Activated CD4-positive, alpha-beta T cell treated with anti-CD3 and anti-CD28 coated beads for 36 hours (primary cell): ENCODE measurements at regions of chr10 and their contacts with region 1.

Region 1: DNA sequence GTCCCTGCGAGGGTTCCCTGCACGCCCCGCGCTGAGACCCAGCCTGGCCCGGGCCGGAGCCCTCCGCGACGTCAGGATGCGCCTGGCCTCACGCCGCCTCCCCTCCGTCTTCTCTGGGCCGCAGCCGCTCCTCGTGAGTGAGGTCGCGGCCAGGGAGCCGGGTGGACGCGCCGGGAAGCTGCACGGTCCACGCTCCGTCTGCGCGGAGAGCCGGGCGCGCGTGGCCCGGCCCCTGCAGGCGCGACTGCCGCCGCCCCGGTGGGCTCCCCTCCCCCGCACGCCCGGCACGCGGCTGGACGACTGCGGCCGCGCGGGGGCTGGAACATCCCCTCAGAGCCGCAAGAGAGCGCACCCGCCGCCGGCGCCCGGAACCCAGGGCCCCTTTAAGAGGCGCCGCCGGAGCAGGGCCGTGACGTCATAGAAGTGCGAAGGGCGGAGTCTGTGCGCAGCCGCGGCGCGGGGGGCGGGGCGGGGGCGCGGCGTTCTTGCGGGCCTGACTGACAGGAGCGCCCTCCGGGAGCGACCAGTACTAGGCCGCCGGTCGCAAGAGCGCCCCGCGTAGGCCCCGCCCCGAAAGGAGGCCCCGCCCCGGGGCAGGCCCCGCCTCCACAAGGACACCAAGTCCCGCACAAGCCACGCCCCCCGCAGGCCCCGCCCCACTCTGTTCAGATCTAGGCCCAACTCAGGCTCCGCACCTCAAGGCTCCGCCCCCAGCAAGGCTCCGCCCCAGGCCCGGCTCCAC is 445 bp upstream of the INPP5A start:
- DNase-seq: peak; percentile 100
- ATAC-seq: peak; percentile 89
- H3K4me3 Mint-ChIP-seq: peak overlapping the region; percentile 68
- H3K27ac Mint-ChIP-seq: no peak overlapping the region
- H3K4me1 Mint-ChIP-seq: peaks cover 49% of the 10 kb centered on the region
- H3K27me3 Mint-ChIP-seq: no peaks in the 10 kb centered on the region

Region 2: DNA sequence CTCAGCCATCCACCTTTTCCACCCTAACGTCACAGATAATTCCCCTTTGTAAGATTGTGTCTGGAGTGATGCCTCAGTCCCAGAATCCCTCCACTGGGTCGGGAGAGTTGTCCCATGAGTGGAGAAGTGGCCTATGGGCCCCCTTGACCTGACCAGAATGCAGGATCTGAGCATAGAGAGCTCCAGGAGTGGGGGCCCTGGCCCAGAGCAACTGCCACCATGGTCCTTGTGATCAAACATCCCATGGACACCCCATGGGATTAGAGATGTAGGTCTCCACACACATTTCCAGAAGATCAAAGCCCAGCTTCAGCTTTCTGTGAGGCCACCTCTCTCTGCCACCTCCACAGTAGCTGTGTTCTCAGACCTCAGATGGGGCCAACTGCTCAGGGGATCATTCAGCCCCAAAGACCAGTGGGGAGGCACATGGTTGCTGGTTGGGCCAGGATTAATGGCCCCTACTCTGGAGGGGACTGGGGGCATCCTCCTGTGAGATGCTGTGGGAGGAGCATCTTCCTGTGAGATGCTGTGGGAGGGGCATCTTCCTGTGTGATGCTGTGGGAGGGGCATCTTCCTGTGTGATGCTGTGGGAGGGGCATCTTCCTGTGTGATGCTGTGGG is 378.9 kb before region 1 on chr10:
- CTCF ChIA-PET with region 1: no interaction called
- POLR2A ChIA-PET with region 1: no interaction called
- intact Hi-C with region 1: loop called in 1 of 2 experiments (anchors 1 kb)
- DNase-seq: peak; percentile 57
- ATAC-seq: peak; percentile 56
- H3K4me3 Mint-ChIP-seq: no peak overlapping the region
- H3K27ac Mint-ChIP-seq: peak overlapping the region; percentile 82
- H3K4me1 Mint-ChIP-seq: peaks cover 22% of the 10 kb centered on the region
- H3K27me3 Mint-ChIP-seq: no peaks in the 10 kb centered on the region

Region 3: DNA sequence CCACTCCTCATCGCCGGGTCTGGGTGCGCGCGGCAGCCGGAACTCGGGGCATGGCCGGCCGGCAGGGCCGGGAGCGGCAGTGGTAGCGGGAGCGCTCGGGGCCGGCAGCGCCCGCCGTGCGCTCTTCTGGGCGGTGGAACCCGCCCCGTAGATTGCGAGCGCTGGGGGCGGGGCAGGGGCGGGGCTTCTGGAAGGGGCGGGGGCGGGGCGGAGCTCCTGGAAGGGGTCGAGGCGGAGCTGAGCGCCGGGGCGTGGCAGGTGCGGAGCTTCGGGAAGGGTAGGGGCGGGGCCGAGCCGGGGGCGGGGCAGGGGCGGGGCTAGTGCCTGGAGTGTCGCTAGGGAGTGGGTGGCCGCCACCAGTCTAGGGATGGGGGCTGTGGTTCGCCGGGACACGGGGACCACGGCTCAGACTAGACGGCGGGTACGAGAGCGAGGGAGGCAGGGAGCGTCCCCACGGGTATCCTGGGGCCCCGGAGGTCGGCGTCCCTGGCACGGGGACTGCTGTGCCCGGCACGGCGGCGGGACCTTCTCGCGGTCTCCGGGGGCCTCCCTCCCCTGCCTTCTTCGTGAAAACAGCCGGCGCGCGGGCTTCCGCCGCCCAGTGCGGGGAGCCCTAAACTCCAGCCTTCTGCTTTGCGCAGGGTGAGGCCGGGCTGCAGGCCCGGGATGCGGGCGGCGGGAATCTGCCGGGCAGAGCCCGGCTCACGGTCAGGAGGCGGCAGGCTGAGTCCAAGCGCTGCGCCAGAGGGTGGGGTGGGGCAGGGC is 229.1 kb before region 1 on chr10 and contains the start of gene STK32C:
- CTCF ChIA-PET with region 1: no interaction called
- POLR2A ChIA-PET with region 1: no interaction called
- intact Hi-C with region 1: loop called in 1 of 2 experiments (anchors 1 kb)
- DNase-seq: peak; percentile 96
- ATAC-seq: peak; percentile 86
- H3K4me3 Mint-ChIP-seq: peak within 1 kb of the TSS; percentile 84
- H3K27ac Mint-ChIP-seq: no peak within 1 kb of the TSS
- H3K4me1 Mint-ChIP-seq: peaks cover 8% of the 10 kb centered on the region
- H3K27me3 Mint-ChIP-seq: peaks cover 2% of the 10 kb centered on the region
- total RNA-seq, gene STK32C: 15.8 to 19.9 TPM

Region 4: DNA sequence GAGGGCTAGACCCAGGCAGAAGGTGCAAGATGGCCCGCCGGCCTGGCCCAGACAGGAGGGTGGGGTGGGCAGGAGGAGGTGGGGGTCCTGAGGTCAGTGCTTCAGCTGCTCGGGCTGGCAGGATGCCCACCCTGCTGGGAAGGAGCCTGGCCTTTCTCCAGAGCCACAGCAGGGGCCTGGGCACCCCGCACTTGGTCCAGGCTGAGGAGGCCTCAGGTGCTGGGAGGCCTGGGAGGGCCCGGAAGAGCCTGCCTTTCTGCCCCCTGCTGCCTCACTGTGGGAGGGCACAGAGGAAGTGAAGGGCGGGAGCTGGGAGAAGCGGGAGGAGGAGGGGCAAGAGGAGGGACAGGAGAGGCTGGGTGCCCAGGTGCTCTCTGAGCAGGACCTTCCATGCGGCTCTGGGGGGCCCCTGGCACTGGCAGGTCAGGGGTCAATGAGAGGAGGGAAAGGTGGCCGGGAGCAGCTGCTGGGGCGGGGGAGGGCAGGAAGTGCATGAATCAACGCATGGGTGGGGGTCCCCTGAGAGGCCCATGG is 90.4 kb before region 1 on chr10:
- CTCF ChIA-PET with region 1: no interaction called
- POLR2A ChIA-PET with region 1: no interaction called
- intact Hi-C with region 1: loop called in 1 of 2 experiments (anchors 1 kb)
- DNase-seq: peak; percentile 90
- ATAC-seq: peak; percentile 76
- H3K4me3 Mint-ChIP-seq: peak overlapping the region; percentile 78
- H3K27ac Mint-ChIP-seq: peak overlapping the region; percentile 99
- H3K4me1 Mint-ChIP-seq: peaks cover 35% of the 10 kb centered on the region
- H3K27me3 Mint-ChIP-seq: no peaks in the 10 kb centered on the region

Region 5: GRCh38 chr10:132516771-132517725 is 20.1 kb before region 1 on chr10:
- CTCF ChIA-PET with region 1: no interaction called
- POLR2A ChIA-PET with region 1: no interaction called
- intact Hi-C with region 1: no loop called
- DNase-seq: peak; percentile 2
- ATAC-seq: no peak
- H3K4me3 Mint-ChIP-seq: no peak overlapping the region
- H3K27ac Mint-ChIP-seq: no peak overlapping the region
- H3K4me1 Mint-ChIP-seq: no peaks in the 10 kb centered on the region
- H3K27me3 Mint-ChIP-seq: no peaks in the 10 kb centered on the region

Region 6: DNA sequence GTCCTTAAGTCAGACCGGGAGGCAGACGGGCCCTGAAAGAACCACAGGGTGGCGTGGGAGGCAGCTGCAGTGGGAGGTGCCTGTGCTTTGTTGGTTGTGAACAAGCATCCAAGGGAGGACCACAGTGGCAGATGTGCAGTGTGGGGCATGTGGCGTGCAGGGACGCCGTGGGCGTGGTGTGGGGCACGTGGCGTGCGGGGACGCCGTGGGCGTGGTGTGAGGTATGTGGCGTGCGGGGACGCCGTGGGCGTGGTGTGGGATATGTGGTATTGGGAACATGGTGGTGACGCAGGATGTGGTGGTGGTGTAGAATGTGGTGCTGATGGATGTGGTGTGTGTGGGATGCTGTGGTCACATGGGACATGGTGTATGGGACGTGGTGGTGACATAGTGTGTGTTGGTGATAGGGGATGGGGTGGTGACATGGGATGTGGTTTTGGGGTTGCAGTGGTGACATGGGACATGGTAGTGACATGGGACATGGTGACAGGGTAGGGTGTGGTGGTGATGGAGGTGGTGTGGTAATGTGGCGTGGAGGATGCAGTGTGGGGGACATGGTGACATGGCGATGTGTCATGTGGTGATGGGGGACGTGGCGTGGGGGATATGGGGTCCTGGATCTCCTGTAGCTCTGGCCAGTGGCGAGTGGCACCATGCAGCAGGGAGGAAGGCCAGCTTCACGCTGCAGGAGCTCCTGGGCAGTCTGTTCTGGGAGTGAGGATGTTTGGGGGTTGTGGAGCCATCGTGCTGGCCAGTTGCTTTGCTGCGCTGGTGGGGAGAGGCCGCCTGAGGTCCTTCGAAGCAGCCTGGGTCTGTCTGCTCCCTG is 79.2 kb after region 1 on chr10:
- CTCF ChIA-PET with region 1: no interaction called
- POLR2A ChIA-PET with region 1: no interaction called
- intact Hi-C with region 1: no loop called
- DNase-seq: peak; percentile 80
- ATAC-seq: peak; percentile 80
- H3K4me3 Mint-ChIP-seq: peak overlapping the region; percentile 44
- H3K27ac Mint-ChIP-seq: peak overlapping the region; percentile 58
- H3K4me1 Mint-ChIP-seq: peaks cover 28% of the 10 kb centered on the region
- H3K27me3 Mint-ChIP-seq: peaks cover 3% of the 10 kb centered on the region

Region 7: GRCh38 chr10:132637477-132638129 is 100.5 kb after region 1 on chr10:
- CTCF ChIA-PET with region 1: interaction called, 3 read pairs
- POLR2A ChIA-PET with region 1: no interaction called
- intact Hi-C with region 1: loop called (anchors 5 kb)
- DNase-seq: peak; percentile 21
- ATAC-seq: peak; percentile 66
- H3K4me3 Mint-ChIP-seq: no peak overlapping the region
- H3K27ac Mint-ChIP-seq: no peak overlapping the region
- H3K4me1 Mint-ChIP-seq: peaks cover 15% of the 10 kb centered on the region
- H3K27me3 Mint-ChIP-seq: no peaks in the 10 kb centered on the region

Region 8: GRCh38 chr10:132714096-132714721 is 177.1 kb after region 1 on chr10:
- CTCF ChIA-PET with region 1: no interaction called
- POLR2A ChIA-PET with region 1: no interaction called
- intact Hi-C with region 1: no loop called
- DNase-seq: no peak
- ATAC-seq: no peak
- H3K4me3 Mint-ChIP-seq: no peak overlapping the region
- H3K27ac Mint-ChIP-seq: no peak overlapping the region
- H3K4me1 Mint-ChIP-seq: no peaks in the 10 kb centered on the region
- H3K27me3 Mint-ChIP-seq: no peaks in the 10 kb centered on the region

Region 9: GRCh38 chr10:133357285-133358151 is 820.4 kb after region 1 on chr10 and contains the start of gene FUOM:
- CTCF ChIA-PET with region 1: no interaction called
- POLR2A ChIA-PET with region 1: no interaction called
- intact Hi-C with region 1: loop called in 1 of 2 experiments (anchors 2 kb)
- DNase-seq: peak; percentile 87
- ATAC-seq: peak; percentile 92
- H3K4me3 Mint-ChIP-seq: peak within 1 kb of the TSS; percentile 77
- H3K27ac Mint-ChIP-seq: peak within 1 kb of the TSS; percentile 60
- H3K4me1 Mint-ChIP-seq: peaks cover 7% of the 10 kb centered on the region
- H3K27me3 Mint-ChIP-seq: no peaks in the 10 kb centered on the region
- total RNA-seq, gene FUOM: 28.3 to 37.0 TPM